ENCODE measurements at regions of chr5 and their contacts with region 1.

Region 1: GRCh38 chr5:39177631-39177964 is 41.8 kb downstream of the FYB1 start:
- DNase-seq: no peak
- H3K4me3 Mint-ChIP-seq: peak overlapping the region; percentile 78
- H3K27ac Mint-ChIP-seq: peak overlapping the region; percentile 77
- H3K4me1 Mint-ChIP-seq: peaks cover 89% of the 10 kb centered on the region
- H3K27me3 Mint-ChIP-seq: no peaks in the 10 kb centered on the region

Region 2: GRCh38 chr5:38615981-38616451 is 561.6 kb before region 1 on chr5:
- intact Hi-C with region 1: no loop called
- DNase-seq: no peak
- H3K4me3 Mint-ChIP-seq: no peak overlapping the region
- H3K27ac Mint-ChIP-seq: no peak overlapping the region
- H3K4me1 Mint-ChIP-seq: no peaks in the 10 kb centered on the region
- H3K27me3 Mint-ChIP-seq: peaks cover 3% of the 10 kb centered on the region

Region 3: DNA sequence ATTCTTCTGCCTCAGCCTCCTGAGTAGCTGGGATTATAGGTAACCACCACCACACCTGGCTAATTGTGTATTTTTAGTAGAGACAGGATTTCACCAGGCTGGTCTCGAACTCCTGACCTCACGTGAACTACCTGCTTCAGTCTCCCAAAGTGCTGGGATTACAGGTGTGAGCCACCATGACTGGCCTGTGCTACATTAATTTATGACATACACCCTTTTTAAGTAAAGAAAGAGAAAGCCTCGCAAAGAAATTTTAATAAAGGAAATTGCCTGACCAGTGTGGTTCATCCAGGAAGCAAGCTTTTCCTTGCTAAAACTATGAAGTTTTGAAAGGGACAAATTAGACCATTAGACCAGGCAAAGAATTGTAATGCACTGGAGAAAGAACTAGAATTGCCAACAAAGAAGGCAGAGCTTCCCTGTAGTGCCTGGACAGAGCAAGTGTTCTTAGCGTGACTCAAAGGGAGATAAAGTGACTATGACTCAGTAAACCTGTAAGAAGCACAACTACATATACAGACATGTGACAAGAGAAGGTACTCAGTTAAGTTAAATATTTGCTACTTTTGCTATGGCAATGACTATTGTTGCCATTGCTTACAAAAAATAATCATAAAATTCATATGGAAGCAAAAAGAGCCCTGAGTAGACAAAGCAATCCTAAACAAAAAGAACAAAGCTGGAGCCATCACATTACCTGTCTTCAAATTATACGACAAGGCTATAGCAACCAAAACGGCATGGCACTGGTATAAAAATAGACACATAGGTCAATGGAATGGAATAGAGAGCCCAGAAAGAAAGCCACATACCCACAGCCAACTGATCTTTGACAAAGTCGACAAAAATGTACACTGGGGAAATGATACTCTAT is 12.8 kb before region 1 on chr5:
- intact Hi-C with region 1: loop called (anchors 1 kb)
- DNase-seq: no peak
- H3K4me3 Mint-ChIP-seq: peak overlapping the region; percentile 72
- H3K27ac Mint-ChIP-seq: peak overlapping the region; percentile 96
- H3K4me1 Mint-ChIP-seq: peaks cover 85% of the 10 kb centered on the region
- H3K27me3 Mint-ChIP-seq: no peaks in the 10 kb centered on the region

Region 4: GRCh38 chr5:39187831-39188731 is 10.5 kb after region 1 on chr5:
- intact Hi-C with region 1: loop called (anchors 1 kb)
- DNase-seq: no peak
- H3K4me3 Mint-ChIP-seq: peak overlapping the region; percentile 70
- H3K27ac Mint-ChIP-seq: peak overlapping the region; percentile 97
- H3K4me1 Mint-ChIP-seq: peaks cover 95% of the 10 kb centered on the region
- H3K27me3 Mint-ChIP-seq: no peaks in the 10 kb centered on the region

Region 5: GRCh38 chr5:39209924-39210323 is 32.3 kb after region 1 on chr5:
- intact Hi-C with region 1: loop called (anchors 1 kb)
- DNase-seq: peak; percentile 78
- H3K4me3 Mint-ChIP-seq: peak overlapping the region; percentile 67
- H3K27ac Mint-ChIP-seq: peak overlapping the region; percentile 92
- H3K4me1 Mint-ChIP-seq: peaks cover 94% of the 10 kb centered on the region
- H3K27me3 Mint-ChIP-seq: no peaks in the 10 kb centered on the region

Region 6: DNA sequence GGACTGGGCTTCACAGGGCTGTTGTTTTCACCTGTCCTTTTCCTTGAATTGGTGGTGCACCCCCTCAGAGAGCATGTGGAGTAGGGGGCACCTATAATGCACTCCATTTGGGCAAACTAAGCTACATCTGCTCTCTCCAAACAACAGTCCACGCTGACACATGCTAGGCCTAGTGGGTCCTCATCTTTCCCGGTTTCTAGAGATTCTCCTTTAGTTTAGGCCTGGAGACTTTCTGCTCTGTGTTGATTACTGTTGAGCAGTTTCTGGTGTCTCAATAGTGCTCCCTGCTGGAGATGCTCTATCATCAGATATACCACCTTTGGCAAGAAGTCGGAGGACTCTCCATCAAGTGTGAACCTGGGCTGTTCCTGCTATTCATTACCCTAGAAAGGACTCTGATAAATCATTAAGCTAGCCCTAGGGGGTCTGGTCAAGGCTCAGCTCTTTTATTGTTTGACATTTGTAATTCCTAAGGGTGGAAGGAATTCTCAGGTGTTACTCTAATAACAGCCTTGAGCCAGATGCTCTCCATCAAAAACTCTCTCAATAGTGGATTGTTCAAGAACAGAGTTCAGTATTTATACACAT is 105.7 kb after region 1 on chr5:
- intact Hi-C with region 1: loop called (anchors 1 kb)
- DNase-seq: peak; percentile 54
- H3K4me3 Mint-ChIP-seq: no peak overlapping the region
- H3K27ac Mint-ChIP-seq: no peak overlapping the region
- H3K4me1 Mint-ChIP-seq: peaks cover 22% of the 10 kb centered on the region
- H3K27me3 Mint-ChIP-seq: peaks cover 12% of the 10 kb centered on the region

Region 7: GRCh38 chr5:40404613-40405012 is 1227.0 kb after region 1 on chr5:
- intact Hi-C with region 1: loop called (anchors 5 kb)
- DNase-seq: peak; percentile 12
- H3K4me3 Mint-ChIP-seq: peak overlapping the region; percentile 59
- H3K27ac Mint-ChIP-seq: peak overlapping the region; percentile 99
- H3K4me1 Mint-ChIP-seq: peaks cover 86% of the 10 kb centered on the region
- H3K27me3 Mint-ChIP-seq: no peaks in the 10 kb centered on the region